WTC11 (cell line): ENCODE measurements at regions of chr3 and their contacts with region 1.

Region 1: DNA sequence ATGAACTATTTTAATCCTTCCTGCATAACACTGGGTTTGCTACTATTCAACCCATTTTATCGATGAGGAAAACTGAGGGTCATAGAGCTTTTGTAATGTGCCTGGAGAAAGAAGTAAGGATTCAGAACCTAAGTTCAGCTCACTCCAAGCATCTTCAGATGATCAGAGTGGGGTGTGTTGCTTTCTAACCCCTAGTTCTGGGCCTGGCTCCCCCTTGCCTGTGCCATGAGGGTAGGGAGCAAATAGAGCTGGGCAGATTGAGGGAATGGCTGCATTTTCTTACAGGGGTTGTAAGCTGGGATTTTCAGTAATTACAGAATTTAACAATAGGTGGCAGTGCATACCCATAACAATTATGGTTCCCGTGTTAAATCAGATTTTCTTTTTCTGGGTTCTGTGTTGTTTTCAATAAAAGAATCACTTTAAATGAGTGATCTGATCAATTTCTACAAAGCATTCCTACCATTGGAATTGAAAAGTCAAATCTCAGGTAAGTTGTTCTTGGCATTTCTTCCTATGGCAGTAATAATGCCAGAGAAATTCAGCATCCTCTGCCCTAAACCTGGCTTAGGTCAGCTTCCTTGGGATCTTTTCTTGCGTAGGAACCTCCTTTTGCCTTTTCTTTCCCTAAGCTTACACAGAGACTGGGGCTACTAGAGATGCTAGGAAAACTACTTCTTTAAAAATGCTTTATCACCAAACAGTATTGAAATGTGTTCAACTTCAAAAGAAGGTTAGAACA is 103.8 kb upstream of the IL12A start:
- DNase-seq: no peak
- ATAC-seq: peak; percentile 65
- H3K4me3 Mint-ChIP-seq: no peak overlapping the region
- H3K27ac Mint-ChIP-seq: no peak overlapping the region
- H3K4me1 Mint-ChIP-seq: peaks cover 24% of the 10 kb centered on the region
- H3K27me3 Mint-ChIP-seq: no peaks in the 10 kb centered on the region
- CTCF ChIP-seq: no peak

Region 2: GRCh38 chr3:159763602-159764489 is 121.0 kb before region 1 on chr3:
- CTCF ChIA-PET with region 1: no interaction called
- POLR2A ChIA-PET with region 1: no interaction called
- DNase-seq: peak; percentile 81
- ATAC-seq: peak; percentile 58
- H3K4me3 Mint-ChIP-seq: peak overlapping the region; percentile 97
- H3K27ac Mint-ChIP-seq: peak overlapping the region; percentile 92; the same call in 1 of the 2 replicates
- H3K4me1 Mint-ChIP-seq: peaks cover 41% of the 10 kb centered on the region
- H3K27me3 Mint-ChIP-seq: peaks cover 17% of the 10 kb centered on the region
- CTCF ChIP-seq: no peak

Region 3: DNA sequence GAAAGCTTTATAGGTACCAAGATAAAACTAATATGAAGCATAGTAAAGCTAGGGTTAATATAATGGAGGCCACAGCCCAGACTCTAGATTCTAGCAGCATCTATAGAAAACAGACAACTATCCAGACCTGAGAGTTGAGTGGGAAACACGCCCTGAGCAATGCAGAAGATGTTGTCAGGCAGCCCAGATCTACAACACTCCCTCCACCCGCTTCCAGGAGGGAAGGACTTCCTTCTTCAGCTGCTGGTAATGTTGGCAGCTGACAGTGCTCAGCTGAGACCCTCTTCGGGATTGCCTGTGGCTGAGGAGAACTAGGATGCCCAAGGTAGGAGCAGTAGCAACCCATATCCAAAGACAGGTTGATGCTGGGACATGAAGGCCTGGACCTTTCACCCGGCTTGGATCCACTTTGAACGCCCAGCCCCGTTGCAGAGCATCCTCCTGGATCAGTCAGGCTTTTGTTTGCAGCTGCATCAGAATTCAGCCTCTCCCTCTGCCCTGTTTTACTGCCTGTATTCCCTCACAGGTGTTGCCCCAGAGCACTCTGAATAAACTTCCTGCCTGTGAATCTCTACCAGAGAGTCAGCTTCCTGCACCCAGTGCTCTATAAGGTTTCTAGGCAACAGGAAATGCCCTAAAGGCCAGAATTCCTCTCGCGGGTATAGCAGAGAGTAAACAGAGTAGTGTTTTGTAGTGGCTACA is 70.9 kb before region 1 on chr3:
- CTCF ChIA-PET with region 1: interaction called, 25 read pairs
- POLR2A ChIA-PET with region 1: no interaction called
- DNase-seq: peak; percentile 19
- ATAC-seq: peak; percentile 96
- H3K4me3 Mint-ChIP-seq: no peak overlapping the region
- H3K27ac Mint-ChIP-seq: 0 out of 2 replicates have a peak overlapping the region, but pooled peaks have one; percentile 45
- H3K4me1 Mint-ChIP-seq: peaks cover 27% of the 10 kb centered on the region
- H3K27me3 Mint-ChIP-seq: no peaks in the 10 kb centered on the region
- CTCF ChIP-seq: no peak

Region 4: GRCh38 chr3:159828542-159828943 is 56.3 kb before region 1 on chr3:
- CTCF ChIA-PET with region 1: interaction called, 16 read pairs
- POLR2A ChIA-PET with region 1: no interaction called
- DNase-seq: no peak
- ATAC-seq: peak; percentile 69
- H3K4me3 Mint-ChIP-seq: no peak overlapping the region
- H3K27ac Mint-ChIP-seq: no peak overlapping the region
- H3K4me1 Mint-ChIP-seq: peaks cover 2% of the 10 kb centered on the region; the same call in 1 of the 2 replicates
- H3K27me3 Mint-ChIP-seq: no peaks in the 10 kb centered on the region
- CTCF ChIP-seq: peak; percentile 42; the same call in 1 of the 2 replicates

Region 5: DNA sequence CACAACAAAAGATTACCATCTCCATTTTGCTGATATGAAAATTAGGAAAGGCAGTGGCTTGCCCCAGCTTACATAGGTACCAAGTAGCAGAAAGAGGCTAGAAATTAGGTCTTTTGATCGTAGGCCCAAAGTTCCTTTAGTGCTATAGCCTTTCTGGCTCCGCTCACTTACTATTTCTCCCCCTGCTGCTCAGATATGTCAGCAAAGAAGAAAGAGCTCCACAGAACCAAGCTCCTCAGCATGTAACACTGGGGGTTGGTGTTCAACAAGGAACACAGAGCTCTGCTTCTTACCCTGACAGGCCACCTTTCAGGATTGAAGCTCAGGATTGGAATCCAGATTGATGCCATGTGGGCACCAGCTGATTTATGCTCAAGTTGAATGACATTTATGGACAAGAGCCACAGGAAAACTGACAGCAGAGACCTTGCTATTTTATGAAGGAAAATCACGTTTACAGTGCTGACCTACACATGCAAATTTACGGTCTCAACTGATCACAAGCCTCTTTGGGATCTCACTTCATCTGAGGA is 97.7 kb after region 1 on chr3:
- CTCF ChIA-PET with region 1: interaction called, 34 read pairs
- POLR2A ChIA-PET with region 1: no interaction called
- DNase-seq: no peak
- ATAC-seq: peak; percentile 90
- H3K4me3 Mint-ChIP-seq: no peak overlapping the region
- H3K27ac Mint-ChIP-seq: no peak overlapping the region
- H3K4me1 Mint-ChIP-seq: no peaks in the 10 kb centered on the region
- H3K27me3 Mint-ChIP-seq: peaks cover 3% of the 10 kb centered on the region
- CTCF ChIP-seq: no peak

Region 6: DNA sequence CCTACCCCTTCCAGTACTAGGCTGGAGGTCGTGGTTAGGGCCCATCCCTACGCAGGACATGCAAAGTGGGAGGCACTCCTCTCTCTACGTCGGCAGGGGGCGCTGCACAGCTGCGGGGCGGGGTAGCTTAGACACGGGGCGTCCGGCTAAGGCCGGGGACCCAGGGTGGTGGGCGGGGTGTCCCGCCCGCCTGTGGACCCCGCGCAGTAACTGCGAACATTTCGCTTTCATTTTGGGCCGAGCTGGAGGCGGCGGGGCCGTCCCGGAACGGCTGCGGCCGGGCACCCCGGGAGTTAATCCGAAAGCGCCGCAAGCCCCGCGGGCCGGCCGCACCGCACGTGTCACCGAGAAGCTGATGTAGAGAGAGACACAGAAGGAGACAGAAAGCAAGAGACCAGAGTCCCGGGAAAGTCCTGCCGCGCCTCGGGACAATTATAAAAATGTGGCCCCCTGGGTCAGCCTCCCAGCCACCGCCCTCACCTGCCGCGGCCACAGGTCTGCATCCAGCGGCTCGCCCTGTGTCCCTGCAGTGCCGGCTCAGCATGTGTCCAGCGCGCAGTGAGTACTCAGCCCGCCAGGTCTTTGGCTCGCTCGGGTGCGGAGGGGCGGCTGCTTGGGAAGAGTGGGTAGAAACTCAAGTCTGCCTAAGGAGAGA is 103.9 kb after region 1 on chr3 and contains the start of gene IL12A:
- CTCF ChIA-PET with region 1: interaction called, 34 read pairs
- POLR2A ChIA-PET with region 1: no interaction called
- DNase-seq: peak; percentile 87
- ATAC-seq: peak; percentile 97
- H3K4me3 Mint-ChIP-seq: peak within 1 kb of the TSS; percentile 75
- H3K27ac Mint-ChIP-seq: no peak within 1 kb of the TSS
- H3K4me1 Mint-ChIP-seq: peaks cover 24% of the 10 kb centered on the region
- H3K27me3 Mint-ChIP-seq: peaks cover 33% of the 10 kb centered on the region
- CTCF ChIP-seq: peak; percentile 96
- total RNA-seq, gene IL12A: 0.69 to 1.0 TPM (median 0.69 TPM) in 3 replicates

Region 7: DNA sequence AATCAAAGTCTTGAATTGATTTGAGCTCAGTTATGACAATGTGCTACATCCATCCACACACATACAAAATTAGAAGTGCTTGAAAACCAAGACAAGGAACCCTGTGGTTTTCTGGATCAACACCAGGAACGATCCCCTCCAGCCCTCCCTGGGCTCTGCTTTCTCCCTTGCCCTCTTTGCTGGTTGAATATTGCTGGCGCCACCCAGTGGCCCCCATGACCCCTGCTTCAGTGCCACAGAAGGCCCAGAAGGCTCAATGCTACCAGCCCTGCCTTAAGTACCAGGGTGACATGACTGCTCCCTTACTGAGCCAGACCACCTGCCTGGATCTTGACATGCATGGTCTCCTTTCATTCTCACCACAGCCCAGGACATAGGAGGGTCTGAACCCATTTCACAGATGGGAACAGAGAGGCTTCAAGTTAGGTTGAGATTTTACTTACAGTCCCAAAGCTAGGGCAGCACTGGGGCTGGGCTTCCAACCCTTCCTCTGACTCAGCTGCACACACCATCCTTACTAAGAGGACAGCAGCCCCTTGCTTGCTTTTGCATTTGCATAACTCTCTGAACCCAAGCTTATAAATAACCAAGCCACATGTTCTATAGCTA is 118.8 kb after region 1 on chr3:
- CTCF ChIA-PET with region 1: interaction called, 46 read pairs
- POLR2A ChIA-PET with region 1: interaction called, 3 read pairs
- DNase-seq: peak; percentile 78
- ATAC-seq: peak; percentile 97
- H3K4me3 Mint-ChIP-seq: no peak overlapping the region
- H3K27ac Mint-ChIP-seq: no peak overlapping the region
- H3K4me1 Mint-ChIP-seq: peaks cover 17% of the 10 kb centered on the region
- H3K27me3 Mint-ChIP-seq: no peaks in the 10 kb centered on the region
- CTCF ChIP-seq: peak; percentile 35; the same call in 1 of the 2 replicates